Activated naive CD4-positive, alpha-beta T cell treated with anti-CD3 and anti-CD28 coated beads, Interleukin-2, amount 10 ng/mL, durations not matched to agents 7 days and 5 days (primary cell): ENCODE measurements at regions of chr14 and their contacts with region 1.

Region 1: DNA sequence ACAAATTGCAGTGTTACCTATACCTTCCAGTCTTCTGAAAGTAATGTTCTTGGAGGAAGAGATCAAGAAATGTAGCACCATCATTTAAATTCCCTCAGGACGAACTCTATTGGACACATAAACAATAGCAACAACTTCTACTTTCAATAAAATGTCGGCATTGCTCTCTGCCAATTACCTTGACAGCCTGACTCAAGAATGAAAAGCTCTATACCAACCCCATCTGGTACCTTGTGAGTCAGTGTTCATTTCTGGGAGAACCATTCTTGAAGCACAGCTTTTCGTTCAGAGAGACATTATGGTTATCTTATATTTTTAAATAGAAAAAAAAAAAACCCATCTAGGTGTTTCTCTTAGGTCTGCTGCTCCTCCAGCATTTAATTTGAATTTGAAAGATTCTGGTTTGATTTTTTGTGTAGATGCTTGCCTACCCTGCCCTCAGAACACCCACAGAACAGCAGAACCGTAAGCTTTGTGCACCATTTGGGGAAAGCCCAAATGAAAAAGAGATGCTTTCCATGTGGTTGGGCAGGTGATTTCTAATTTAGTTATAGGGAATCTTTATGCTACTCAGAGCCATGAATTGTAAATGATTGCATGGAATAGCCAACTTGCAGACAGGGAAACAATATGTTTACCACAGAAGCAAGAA is 156.0 kb downstream of the SAMD4A start:
- DNase-seq: peak; percentile 33
- H3K4me3 Mint-ChIP-seq: no peak overlapping the region
- H3K27ac Mint-ChIP-seq: no peak overlapping the region
- H3K4me1 Mint-ChIP-seq: peaks cover 14% of the 10 kb centered on the region
- H3K27me3 Mint-ChIP-seq: peaks cover 28% of the 10 kb centered on the region

Region 2: GRCh38 chr14:54712465-54713200 is 10.3 kb before region 1 on chr14:
- CTCF ChIA-PET with region 1: interaction called, 16 read pairs
- DNase-seq: no peak
- H3K4me3 Mint-ChIP-seq: no peak overlapping the region
- H3K27ac Mint-ChIP-seq: no peak overlapping the region
- H3K4me1 Mint-ChIP-seq: peaks cover 22% of the 10 kb centered on the region
- H3K27me3 Mint-ChIP-seq: peaks cover 13% of the 10 kb centered on the region

Region 3: DNA sequence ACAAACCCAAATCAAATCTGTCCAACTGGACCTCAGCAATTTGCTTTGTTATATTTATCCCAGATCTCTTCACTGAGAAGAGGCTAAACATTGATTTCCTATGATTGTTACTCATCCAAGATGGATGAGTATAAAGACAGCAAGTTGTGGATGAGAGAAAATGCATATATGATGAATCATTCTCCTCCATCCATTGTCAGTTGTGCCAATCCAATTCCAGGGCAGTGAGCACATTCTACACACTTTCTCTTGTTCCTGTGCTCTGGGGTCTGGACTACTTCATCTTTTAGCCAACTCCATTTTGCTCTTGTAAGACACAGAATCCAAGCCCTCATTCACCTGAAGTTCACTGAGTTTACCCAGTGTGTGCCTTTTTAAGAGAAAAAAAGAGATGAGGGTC is 74.1 kb after region 1 on chr14:
- CTCF ChIA-PET with region 1: no interaction called
- DNase-seq: no peak
- H3K4me3 Mint-ChIP-seq: no peak overlapping the region
- H3K27ac Mint-ChIP-seq: no peak overlapping the region
- H3K4me1 Mint-ChIP-seq: no peaks in the 10 kb centered on the region
- H3K27me3 Mint-ChIP-seq: peaks cover 42% of the 10 kb centered on the region